Right cardiac atrium (tissue), 5 donors: ENCODE measurements at regions of chr20 and their contacts with region 1.

Region 1: DNA sequence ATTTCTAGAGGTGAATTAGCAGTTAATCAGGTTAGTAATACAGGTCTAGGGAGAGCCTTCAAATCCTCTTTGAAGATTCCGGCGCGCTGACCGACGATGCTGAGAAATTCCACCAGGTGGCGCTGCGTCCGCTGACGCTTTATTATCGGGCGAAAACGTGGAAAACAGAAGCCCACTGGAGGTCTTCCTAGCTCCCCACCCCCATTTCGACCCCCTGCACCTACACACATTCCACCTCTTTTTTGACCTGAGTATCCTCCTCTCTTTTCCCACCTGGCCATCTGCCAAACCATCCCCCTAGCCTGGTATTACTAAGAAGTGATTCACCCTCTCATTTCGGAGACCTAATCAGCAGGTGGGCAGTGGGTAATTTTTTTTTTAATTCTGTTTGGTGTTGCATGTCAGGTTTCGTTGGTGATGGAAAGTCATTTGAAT is 65.4 kb upstream of the RIN2 start:
- DNase-seq: peak; percentile 46 to 83 (median 81)
- ATAC-seq: peak in 1 of 2 donors; percentile 34
- H3K4me3 ChIP-seq: no peak overlapping the region
- H3K27ac ChIP-seq: no peak overlapping the region
- H3K4me1 ChIP-seq: peaks cover 4% of the 10 kb centered on the region
- H3K27me3 ChIP-seq: no peaks in the 10 kb centered on the region

Region 2: GRCh38 chr20:19290978-19291817 is 401.5 kb before region 1 on chr20:
- intact Hi-C with region 1: no loop called
- DNase-seq: no peak
- ATAC-seq: peak in 1 of 2 donors; percentile 31
- H3K4me3 ChIP-seq: no peak overlapping the region
- H3K27ac ChIP-seq: no peak overlapping the region
- H3K4me1 ChIP-seq: no peaks in the 10 kb centered on the region
- H3K27me3 ChIP-seq: no peaks in the 10 kb centered on the region

Region 3: GRCh38 chr20:19757487-19758132 is 64.9 kb after region 1 on chr20:
- intact Hi-C with region 1: loop called in 2 of 4 experiments (anchors 2 to 5 kb)
- DNase-seq: peak; percentile 92 to 97 (median 97)
- ATAC-seq: peak; percentile 91 to 92
- H3K4me3 ChIP-seq: peak overlapping the region; percentile 88
- H3K27ac ChIP-seq: peak overlapping the region; percentile 97
- H3K4me1 ChIP-seq: peaks cover 14% of the 10 kb centered on the region
- H3K27me3 ChIP-seq: no peaks in the 10 kb centered on the region

Region 4: GRCh38 chr20:19784511-19785172 is 91.9 kb after region 1 on chr20:
- intact Hi-C with region 1: loop called in 2 of 4 experiments (anchors 5 to 10 kb)
- DNase-seq: peak; percentile 44 to 75 (median 64)
- ATAC-seq: peak; percentile 76 to 81
- H3K4me3 ChIP-seq: no peak overlapping the region
- H3K27ac ChIP-seq: peak overlapping the region; percentile 91
- H3K4me1 ChIP-seq: peaks cover 16% of the 10 kb centered on the region
- H3K27me3 ChIP-seq: no peaks in the 10 kb centered on the region

Region 5: DNA sequence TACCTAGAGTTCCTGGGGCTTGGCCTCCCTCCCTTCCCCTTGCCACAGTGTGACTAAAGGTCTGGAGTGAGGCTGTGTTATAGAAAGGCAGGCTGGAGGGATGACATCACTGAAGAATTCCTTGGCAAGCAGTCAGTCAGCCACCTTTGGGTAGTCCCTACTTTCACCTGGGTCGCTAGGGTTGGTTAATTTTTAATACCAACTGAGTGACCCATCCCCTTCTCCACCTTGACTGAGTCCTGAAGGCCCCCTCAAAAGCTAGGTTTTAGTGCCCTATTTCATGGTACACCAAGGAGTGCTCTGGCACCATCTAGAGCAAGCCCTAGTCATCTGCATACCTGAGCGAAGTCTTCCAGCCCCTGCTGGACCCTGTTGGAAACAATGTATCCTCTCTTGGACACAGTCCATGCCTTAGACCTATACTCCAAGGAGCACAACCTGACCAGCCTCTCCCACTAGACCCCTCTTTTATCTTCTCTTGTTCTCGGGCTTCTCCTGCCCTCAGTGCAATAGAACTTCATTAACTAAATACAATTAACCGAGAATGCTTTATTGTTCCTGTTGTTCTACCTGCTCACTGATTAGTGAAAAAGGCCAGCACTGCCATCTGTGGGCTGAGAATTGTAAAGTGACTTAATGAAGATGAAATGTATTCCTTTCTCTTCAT is 109.9 kb after region 1 on chr20:
- intact Hi-C with region 1: loop called in 2 of 4 experiments (anchors 5 kb)
- DNase-seq: no peak
- ATAC-seq: peak in 1 of 2 donors; percentile 31
- H3K4me3 ChIP-seq: no peak overlapping the region
- H3K27ac ChIP-seq: no peak overlapping the region
- H3K4me1 ChIP-seq: peaks cover 13% of the 10 kb centered on the region
- H3K27me3 ChIP-seq: no peaks in the 10 kb centered on the region

Region 6: GRCh38 chr20:19986419-19986818 is 293.7 kb after region 1 on chr20:
- intact Hi-C with region 1: loop called in 3 of 4 experiments (anchors 5 to 10 kb)
- DNase-seq: no peak
- ATAC-seq: peak in 1 of 2 donors; percentile 53
- H3K4me3 ChIP-seq: no peak overlapping the region
- H3K27ac ChIP-seq: peak overlapping the region; percentile 46
- H3K4me1 ChIP-seq: peaks cover 18% of the 10 kb centered on the region
- H3K27me3 ChIP-seq: no peaks in the 10 kb centered on the region

Region 7: DNA sequence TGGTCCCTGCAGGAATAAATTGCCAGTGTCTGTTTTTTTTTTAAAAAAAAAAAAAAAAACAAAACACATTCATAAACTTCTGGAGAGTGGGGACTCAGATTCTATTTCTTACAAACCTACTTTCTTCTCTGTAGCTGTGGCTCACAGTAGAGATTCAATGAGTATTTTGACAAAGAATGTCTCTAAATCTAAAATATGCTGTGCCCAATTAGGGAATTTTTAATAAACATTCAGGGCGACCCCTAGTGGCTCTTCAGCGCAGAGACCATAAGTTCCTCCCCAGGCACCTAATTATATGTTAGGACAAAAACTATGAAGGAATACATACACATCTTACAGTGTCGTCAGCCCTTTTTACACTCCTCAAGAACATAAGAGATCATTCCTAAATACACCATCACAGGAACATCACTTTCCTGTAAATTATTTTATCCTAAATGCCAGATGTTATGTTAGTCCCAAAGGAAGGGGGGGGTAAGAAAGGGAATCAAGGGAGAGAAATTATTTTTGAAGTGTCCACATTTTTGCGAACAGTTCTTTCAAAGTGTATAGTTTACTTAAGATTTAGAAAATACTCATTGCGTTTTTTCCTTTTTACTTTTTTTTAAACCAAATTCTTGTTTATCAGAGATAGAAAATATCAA is 302.6 kb after region 1 on chr20:
- intact Hi-C with region 1: loop called in 3 of 4 experiments (anchors 5 to 10 kb)
- DNase-seq: no peak
- ATAC-seq: peak; percentile 18 to 46
- H3K4me3 ChIP-seq: no peak overlapping the region
- H3K27ac ChIP-seq: no peak overlapping the region
- H3K4me1 ChIP-seq: peaks cover 16% of the 10 kb centered on the region
- H3K27me3 ChIP-seq: no peaks in the 10 kb centered on the region